ENCODE measurements at regions of chr6 and their contacts with region 1.

Region 1: GRCh38 chr6:70638468-70638867 is 29.2 kb upstream of the SMAP1 start:
- DNase-seq: no peak
- ATAC-seq: no peak
- H3K4me3 ChIP-seq: no peak overlapping the region
- H3K27ac ChIP-seq: no peak overlapping the region
- H3K4me1 ChIP-seq: no peaks in the 10 kb centered on the region
- H3K27me3 ChIP-seq: peaks cover 3% of the 10 kb centered on the region; the same call in 1 of the 2 replicates
- CTCF ChIP-seq: no peak

Region 2: GRCh38 chr6:70651326-70651905 is 12.9 kb after region 1 on chr6:
- CTCF ChIA-PET with region 1: interaction called, 11 read pairs
- POLR2A ChIA-PET with region 1: no interaction called
- in situ Hi-C with region 1: no loop called
- intact Hi-C with region 1: no loop called
- DNase-seq: no peak
- ATAC-seq: no peak
- H3K4me3 ChIP-seq: no peak overlapping the region
- H3K27ac ChIP-seq: no peak overlapping the region
- H3K4me1 ChIP-seq: no peaks in the 10 kb centered on the region
- H3K27me3 ChIP-seq: no peaks in the 10 kb centered on the region
- CTCF ChIP-seq: no peak

Region 3: DNA sequence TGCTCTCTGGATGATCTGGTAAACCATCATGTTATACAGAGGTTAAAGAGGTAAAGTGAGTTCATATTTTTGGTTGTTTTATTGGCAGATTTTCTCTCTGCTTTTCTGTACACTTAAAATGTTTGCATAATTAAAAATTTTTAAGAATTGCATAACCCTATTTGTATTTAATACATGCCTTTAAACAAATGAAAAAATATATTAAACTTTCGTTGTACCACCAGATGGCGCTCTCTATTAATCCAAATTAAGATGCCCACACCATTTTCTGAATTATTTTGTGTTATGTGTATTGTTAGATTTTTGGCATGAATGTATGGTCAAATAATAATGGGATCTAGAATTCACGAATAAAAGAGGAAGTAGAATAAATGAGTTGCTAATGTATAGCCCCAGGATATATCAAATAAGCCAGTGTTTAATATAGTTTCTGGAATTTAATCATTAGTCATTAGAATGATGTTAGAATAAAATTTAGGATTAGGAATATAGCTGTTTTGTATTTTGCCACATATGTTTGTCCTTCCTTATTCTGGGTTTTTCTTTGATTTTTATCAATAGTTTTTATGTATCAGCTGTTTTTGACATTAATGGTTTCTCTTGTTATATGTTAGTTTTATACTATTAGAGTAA is 68.1 kb after region 1 on chr6:
- CTCF ChIA-PET with region 1: no interaction called
- POLR2A ChIA-PET with region 1: no interaction called
- in situ Hi-C with region 1: no loop called
- intact Hi-C with region 1: no loop called
- DNase-seq: peak; percentile 20
- ATAC-seq: no peak
- H3K4me3 ChIP-seq: no peak overlapping the region
- H3K27ac ChIP-seq: no peak overlapping the region
- H3K4me1 ChIP-seq: no peaks in the 10 kb centered on the region
- H3K27me3 ChIP-seq: no peaks in the 10 kb centered on the region
- CTCF ChIP-seq: peak; percentile 68; the same call in 1 of the 2 replicates